OCI-LY7 (cell line): ENCODE measurements at regions of chr6 and their contacts with region 1.

Region 1: GRCh38 chr6:83192871-83193746 is at the starts of genes PGM3 and RWDD2A:
- DNase-seq: peak; percentile 92
- H3K4me3 ChIP-seq: peak within 1 kb of the TSS; percentile 94
- H3K27ac ChIP-seq: no peak within 1 kb of the TSS
- H3K4me1 ChIP-seq: peaks cover 11% of the 10 kb centered on the region
- CTCF ChIP-seq: no peak
- total RNA-seq, gene PGM3: 17.5 and 18.6 TPM in 2 replicates
- total RNA-seq, gene RWDD2A: 2.2 and 2.9 TPM in 2 replicates

Region 2: DNA sequence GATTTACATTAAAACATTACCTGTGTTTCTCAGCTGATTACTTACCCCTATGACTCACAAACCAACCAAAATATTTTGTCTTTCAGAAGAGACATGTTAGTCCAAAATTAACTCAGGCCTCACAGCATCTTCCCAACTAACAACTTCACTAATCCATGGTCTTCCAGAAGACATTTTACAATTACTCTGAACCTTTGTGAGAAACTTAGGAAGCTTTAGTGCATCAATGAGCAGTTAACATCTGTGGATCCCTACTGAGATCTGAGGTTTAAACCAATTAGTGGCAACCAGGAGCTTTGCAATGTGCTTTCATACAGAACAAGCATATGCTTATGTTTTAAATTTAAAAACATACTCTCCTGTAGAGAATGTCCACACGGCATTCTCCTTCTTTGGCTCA is 397.2 kb before region 1 on chr6:
- CTCF ChIA-PET with region 1: no interaction called
- POLR2A ChIA-PET with region 1: no interaction called
- intact Hi-C with region 1: no loop called
- DNase-seq: no peak
- H3K4me3 ChIP-seq: no peak overlapping the region
- H3K27ac ChIP-seq: no peak overlapping the region
- H3K4me1 ChIP-seq: no peaks in the 10 kb centered on the region
- CTCF ChIP-seq: no peak

Region 3: DNA sequence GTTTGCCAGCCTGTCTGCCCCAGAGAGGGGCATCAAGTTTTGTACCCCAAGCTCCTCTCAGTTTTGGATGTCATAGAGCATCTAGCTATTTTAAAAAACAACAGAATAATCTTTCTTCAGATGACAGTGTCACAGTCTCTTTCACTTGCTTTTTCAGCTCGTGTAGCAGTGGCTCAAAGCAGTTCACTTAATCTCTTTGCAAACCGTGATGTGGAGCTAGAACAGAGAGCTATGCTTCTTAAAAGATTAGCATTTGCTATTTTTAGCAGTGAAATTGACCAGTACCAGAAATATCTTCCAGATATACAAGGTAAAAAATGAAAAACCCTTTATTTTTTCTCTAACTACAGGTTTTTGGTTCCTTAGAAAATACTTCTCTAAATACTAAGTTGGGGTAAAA is 37.3 kb before region 1 on chr6:
- CTCF ChIA-PET with region 1: no interaction called
- POLR2A ChIA-PET with region 1: interaction called, 15 read pairs
- intact Hi-C with region 1: no loop called
- DNase-seq: no peak
- H3K4me3 ChIP-seq: no peak overlapping the region
- H3K27ac ChIP-seq: no peak overlapping the region
- H3K4me1 ChIP-seq: no peaks in the 10 kb centered on the region
- CTCF ChIP-seq: no peak